ENCODE measurements at regions of chr2 and their contacts with region 1.

Region 1: GRCh38 chr2:56390644-56391043 is 206.9 kb downstream of the CCDC85A start:
- DNase-seq: no peak
- H3K4me3 Mint-ChIP-seq: no peak overlapping the region
- H3K27ac Mint-ChIP-seq: no peak overlapping the region
- H3K4me1 Mint-ChIP-seq: no peaks in the 10 kb centered on the region
- H3K27me3 Mint-ChIP-seq: no peaks in the 10 kb centered on the region

Region 2: DNA sequence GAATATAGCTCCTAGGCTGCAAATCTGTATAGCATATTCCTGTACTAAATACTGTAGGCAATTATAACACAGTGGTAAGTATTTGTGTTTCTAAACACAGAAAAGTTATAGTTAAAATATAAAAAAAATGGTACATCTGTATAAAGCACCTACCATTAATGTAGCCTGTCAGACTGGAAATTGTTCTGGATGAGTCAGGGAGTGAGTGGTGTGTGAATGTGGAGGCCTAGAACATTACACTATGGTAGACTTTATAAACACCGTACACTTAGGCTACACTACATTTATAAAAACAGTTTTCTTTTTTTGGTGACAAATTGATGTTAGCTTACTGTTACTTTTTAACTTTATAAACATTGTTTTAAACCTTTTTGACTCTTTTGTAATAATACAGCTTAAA is 19.5 kb after region 1 on chr2:
- CTCF ChIA-PET with region 1: no interaction called
- intact Hi-C with region 1: no loop called
- DNase-seq: no peak
- H3K4me3 Mint-ChIP-seq: no peak overlapping the region
- H3K27ac Mint-ChIP-seq: no peak overlapping the region
- H3K4me1 Mint-ChIP-seq: no peaks in the 10 kb centered on the region
- H3K27me3 Mint-ChIP-seq: no peaks in the 10 kb centered on the region

Region 3: DNA sequence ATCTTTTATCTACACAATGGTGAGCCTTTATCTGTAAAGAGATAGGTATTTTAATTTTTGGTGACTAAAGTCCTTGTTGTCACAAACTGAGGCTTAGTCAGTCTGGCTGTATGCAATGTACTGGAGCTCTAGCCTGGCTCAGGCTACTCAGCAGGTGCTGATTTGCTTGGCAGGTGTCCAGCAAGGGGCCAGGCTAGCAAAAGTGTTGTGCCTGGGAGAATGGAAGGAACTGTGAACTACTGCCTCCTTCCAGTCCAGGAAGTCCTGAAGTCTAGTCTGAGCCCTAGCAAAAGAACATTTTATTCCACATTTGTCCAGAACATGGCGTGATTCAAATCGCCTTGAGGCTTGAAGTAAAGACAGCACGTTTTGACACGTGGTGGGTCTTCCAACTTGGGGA is 53.7 kb after region 1 on chr2:
- CTCF ChIA-PET with region 1: no interaction called
- intact Hi-C with region 1: loop called (anchors 2 kb)
- DNase-seq: no peak
- H3K4me3 Mint-ChIP-seq: no peak overlapping the region
- H3K27ac Mint-ChIP-seq: no peak overlapping the region
- H3K4me1 Mint-ChIP-seq: no peaks in the 10 kb centered on the region
- H3K27me3 Mint-ChIP-seq: no peaks in the 10 kb centered on the region